ENCODE measurements at regions of chr6 and their contacts with region 1.

Region 1: DNA sequence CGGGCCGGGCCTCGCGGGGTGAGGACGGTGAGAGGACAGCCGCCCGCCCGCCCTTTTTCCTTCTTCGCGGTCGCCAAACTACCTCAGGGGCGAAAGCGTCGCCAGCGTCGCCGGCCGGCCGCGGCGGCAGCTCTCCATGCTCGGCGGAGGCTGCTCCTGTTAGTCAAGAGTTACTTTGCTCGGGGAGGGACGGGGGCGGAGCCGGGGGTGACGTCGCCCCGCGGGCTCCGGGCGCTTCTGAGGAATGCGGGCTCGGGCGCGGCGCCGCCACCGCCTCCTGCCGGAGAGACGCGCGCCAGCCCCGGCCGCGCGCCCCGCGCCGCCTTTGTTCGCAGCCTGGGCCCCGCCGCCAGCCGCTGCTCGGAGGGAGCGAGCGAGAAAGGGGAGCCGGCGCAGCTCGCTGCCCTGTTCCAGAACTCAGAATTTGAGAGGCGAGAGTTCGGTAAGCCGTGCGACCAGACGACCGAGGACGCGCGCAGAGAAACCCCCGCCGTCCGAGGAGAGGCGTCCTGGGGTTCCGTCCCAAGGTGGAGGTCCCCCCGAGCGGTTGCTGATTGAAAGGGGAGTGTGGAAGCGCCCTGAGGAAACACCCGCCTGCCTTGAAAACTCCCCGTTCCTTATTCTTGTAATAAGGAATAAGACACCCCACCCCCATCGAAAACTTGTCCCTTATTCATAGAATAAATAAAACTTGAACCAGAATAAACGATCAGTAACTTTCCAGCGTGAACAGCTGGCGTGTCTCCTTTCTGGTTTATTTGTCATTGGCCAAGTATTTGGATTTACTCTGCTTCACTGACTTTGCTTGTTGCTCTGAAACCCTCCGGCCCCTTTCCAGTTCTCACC is at the start of gene PTPRK:
- DNase-seq: peak; percentile 96
- ATAC-seq: peak; percentile 93
- total RNA-seq, gene PTPRK: 27.9 TPM

Region 2: GRCh38 chr6:128725271-128726233 is 204.9 kb after region 1 on chr6:
- intact Hi-C with region 1: loop called (anchors 10 kb)
- DNase-seq: no peak
- ATAC-seq: peak; percentile 48